Naive thymus-derived CD4-positive, alpha-beta T cell (primary cell): ENCODE measurements at regions of chr21 and their contacts with region 1.

Region 1: DNA sequence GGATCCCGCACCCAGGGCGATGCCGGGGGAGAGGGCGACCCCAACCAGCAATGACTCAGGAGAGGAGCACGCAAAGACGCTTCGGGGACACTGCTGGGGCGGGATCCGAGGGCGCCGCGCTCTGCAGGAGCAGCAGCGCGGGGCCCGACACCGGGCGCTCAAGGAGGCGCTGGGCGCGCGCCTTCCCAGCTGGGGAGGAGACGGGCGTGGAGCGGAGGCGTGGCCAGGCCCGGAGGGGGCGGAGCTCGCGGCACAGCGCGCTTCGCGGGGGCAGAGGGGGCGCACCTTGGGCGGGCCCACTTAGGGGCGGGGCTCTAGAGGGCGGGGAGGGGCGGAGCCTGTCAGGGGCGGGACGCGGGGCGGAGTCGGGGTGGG is 369 bp downstream of the SUMO3 start:
- DNase-seq: peak; percentile 87 to 98 (median 91)
- ATAC-seq: peak; percentile 96
- H3K4me3 ChIP-seq: peak overlapping the region; percentile 68
- H3K4me3 Mint-ChIP-seq: peak overlapping the region in 9 of 10 donors; percentile 27 to 83 (median 66)
- H3K27ac ChIP-seq: peak overlapping the region; percentile 96
- H3K27ac Mint-ChIP-seq: peak overlapping the region in 3 of 9 donors; percentile 21 to 42 (median 32)
- H3K4me1 ChIP-seq: no peaks in the 10 kb centered on the region
- H3K4me1 Mint-ChIP-seq: peaks cover 5 to 31% (median 10%) of the 10 kb centered on the region in 7 donors
- H3K27me3 ChIP-seq: no peaks in the 10 kb centered on the region
- H3K27me3 Mint-ChIP-seq: peaks cover 0 to 9% (median 0%) of the 10 kb centered on the region in 5 donors

Region 2: DNA sequence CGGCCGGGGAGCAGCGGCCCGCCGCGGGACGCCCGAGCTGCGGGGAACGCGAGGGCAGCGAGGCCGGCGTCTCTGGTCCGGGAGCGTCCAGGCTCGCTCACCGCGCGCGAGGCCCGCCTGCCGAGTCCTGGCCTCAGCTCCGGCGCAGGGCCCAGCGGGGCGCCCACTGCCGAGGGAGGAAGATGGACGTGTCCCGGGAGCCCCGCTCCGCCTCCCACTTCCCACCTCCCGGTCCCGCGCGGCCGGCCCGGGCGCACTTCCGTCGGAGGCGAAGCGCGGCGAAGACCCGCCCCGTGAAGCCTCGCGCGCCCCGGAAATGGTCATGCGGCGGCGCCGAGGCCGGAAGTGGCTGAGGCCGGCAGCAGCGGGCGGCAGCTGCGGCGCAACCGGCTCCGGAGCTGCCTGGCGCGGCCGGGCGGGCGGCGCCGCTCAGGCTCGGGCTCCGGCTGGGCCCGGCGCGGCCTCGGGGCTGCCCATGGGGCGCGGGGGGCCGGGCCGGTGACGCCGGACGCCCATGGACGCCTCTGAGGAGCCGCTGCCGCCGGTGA is 805.4 kb before region 1 on chr21 and contains the start of gene TRAPPC10:
- CTCF ChIA-PET with region 1: no interaction called
- POLR2A ChIA-PET with region 1: no interaction called
- intact Hi-C with region 1: loop called in 1 of 2 experiments (anchors 5 kb)
- DNase-seq: peak; percentile 60 to 91 (median 73)
- ATAC-seq: peak; percentile 78
- H3K4me3 ChIP-seq: peak within 1 kb of the TSS; percentile 63
- H3K4me3 Mint-ChIP-seq: peak within 1 kb of the TSS; percentile 87 to 97 (median 93)
- H3K27ac ChIP-seq: peak within 1 kb of the TSS; percentile 92
- H3K27ac Mint-ChIP-seq: peak within 1 kb of the TSS; percentile 92 to 96 (median 95)
- H3K4me1 ChIP-seq: peaks cover 24 to 34% of the 10 kb centered on the region in 2 donors
- H3K4me1 Mint-ChIP-seq: peaks cover 38 to 51% (median 50%) of the 10 kb centered on the region in 7 donors
- H3K27me3 ChIP-seq: no peaks in the 10 kb centered on the region
- H3K27me3 Mint-ChIP-seq: no peaks in the 10 kb centered on the region
- total RNA-seq, gene TRAPPC10: 80.6 to 119 (median 93.2) TPM

Region 3: GRCh38 chr21:44801468-44802395 is 15.8 kb before region 1 on chr21 and contains the start of gene UBE2G2:
- CTCF ChIA-PET with region 1: interaction called, 3 read pairs
- POLR2A ChIA-PET with region 1: interaction called, 7 read pairs
- intact Hi-C with region 1: loop called (anchors 1 kb)
- DNase-seq: peak; percentile 79 to 95 (median 88)
- ATAC-seq: peak; percentile 95
- H3K4me3 ChIP-seq: peak within 1 kb of the TSS; percentile 92
- H3K4me3 Mint-ChIP-seq: peak within 1 kb of the TSS; percentile 88 to 100 (median 96)
- H3K27ac ChIP-seq: peak within 1 kb of the TSS; percentile 85
- H3K27ac Mint-ChIP-seq: peak within 1 kb of the TSS; percentile 85 to 99 (median 94)
- H3K4me1 ChIP-seq: peaks cover 19 to 27% of the 10 kb centered on the region in 2 donors
- H3K4me1 Mint-ChIP-seq: peaks cover 24 to 53% (median 45%) of the 10 kb centered on the region in 7 donors
- H3K27me3 ChIP-seq: no peaks in the 10 kb centered on the region
- H3K27me3 Mint-ChIP-seq: no peaks in the 10 kb centered on the region
- total RNA-seq, gene UBE2G2: 108 to 150 (median 129) TPM

Region 4: DNA sequence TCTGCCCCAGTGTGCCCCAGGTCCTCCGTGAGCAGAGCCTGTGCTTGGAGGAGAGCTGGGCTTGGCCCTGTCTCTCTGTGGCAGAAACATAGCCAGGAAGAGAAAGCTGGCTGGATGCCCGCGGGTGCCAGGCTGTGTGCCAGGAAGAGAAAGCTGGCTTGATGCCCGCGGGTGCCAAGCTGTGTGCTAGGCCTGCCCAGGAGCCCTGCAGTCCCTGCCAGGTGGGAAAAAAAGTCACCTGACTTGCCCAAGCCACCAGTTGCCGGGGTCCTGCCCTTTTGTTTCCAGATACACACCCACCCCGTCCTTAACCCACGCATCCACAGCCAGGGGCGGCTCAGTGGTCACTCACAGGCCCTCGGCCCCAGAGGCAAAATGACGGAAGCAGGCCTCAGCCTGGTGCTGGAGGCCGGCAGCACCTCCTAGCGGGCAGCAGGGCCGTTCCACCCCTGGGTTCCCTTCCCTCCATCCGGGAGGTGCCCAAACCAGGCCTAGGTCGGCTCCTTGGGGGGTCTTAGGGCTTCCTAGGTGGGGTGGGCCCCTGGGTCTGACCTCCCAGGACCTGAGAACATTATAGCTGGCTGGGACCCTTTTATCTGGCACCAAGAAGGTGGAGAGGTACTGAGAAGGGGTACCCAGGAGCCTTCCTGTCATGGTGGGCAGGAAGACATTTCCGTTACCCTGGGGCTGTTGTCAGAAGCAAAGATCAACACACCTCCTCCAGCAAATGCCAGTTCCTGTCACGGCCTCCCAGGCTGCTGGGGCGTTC is 94.1 kb after region 1 on chr21:
- CTCF ChIA-PET with region 1: no interaction called
- POLR2A ChIA-PET with region 1: interaction called, 4 read pairs
- intact Hi-C with region 1: loop called in 1 of 2 experiments (anchors 5 kb)
- DNase-seq: peak; percentile 47 to 82 (median 78)
- ATAC-seq: peak; percentile 76
- H3K4me3 ChIP-seq: peak overlapping the region; percentile 49
- H3K4me3 Mint-ChIP-seq: peak overlapping the region; percentile 67 to 91 (median 82)
- H3K27ac ChIP-seq: peak overlapping the region; percentile 80
- H3K27ac Mint-ChIP-seq: peak overlapping the region; percentile 74 to 98 (median 93)
- H3K4me1 ChIP-seq: peaks cover 59 to 83% of the 10 kb centered on the region in 2 donors
- H3K4me1 Mint-ChIP-seq: peaks cover 53 to 86% (median 64%) of the 10 kb centered on the region in 7 donors
- H3K27me3 ChIP-seq: no peaks in the 10 kb centered on the region
- H3K27me3 Mint-ChIP-seq: no peaks in the 10 kb centered on the region

Region 5: GRCh38 chr21:44939532-44940115 is 122.1 kb after region 1 on chr21 and contains the start of gene SLX9:
- CTCF ChIA-PET with region 1: no interaction called
- POLR2A ChIA-PET with region 1: no interaction called
- intact Hi-C with region 1: loop called in 1 of 2 experiments (anchors 1 kb)
- DNase-seq: peak; percentile 70 to 88 (median 79)
- ATAC-seq: peak; percentile 94
- H3K4me3 ChIP-seq: peak within 1 kb of the TSS; percentile 83
- H3K4me3 Mint-ChIP-seq: peak within 1 kb of the TSS; percentile 87 to 95 (median 91)
- H3K27ac ChIP-seq: peak within 1 kb of the TSS; percentile 80
- H3K27ac Mint-ChIP-seq: peak within 1 kb of the TSS; percentile 82 to 96 (median 87)
- H3K4me1 ChIP-seq: peaks cover 22 to 34% of the 10 kb centered on the region in 2 donors
- H3K4me1 Mint-ChIP-seq: peaks cover 30 to 55% (median 45%) of the 10 kb centered on the region in 7 donors
- H3K27me3 ChIP-seq: no peaks in the 10 kb centered on the region
- H3K27me3 Mint-ChIP-seq: no peaks in the 10 kb centered on the region
- total RNA-seq, gene SLX9: 17.8 to 46.4 (median 20.6) TPM

Region 6: GRCh38 chr21:45074048-45074817 is 256.7 kb after region 1 on chr21 and contains the start of gene ADARB1:
- CTCF ChIA-PET with region 1: no interaction called
- POLR2A ChIA-PET with region 1: no interaction called
- intact Hi-C with region 1: loop called (anchors 5 kb)
- DNase-seq: peak; percentile 50 to 82 (median 69)
- ATAC-seq: peak; percentile 84
- H3K4me3 ChIP-seq: peak within 1 kb of the TSS; percentile 65
- H3K4me3 Mint-ChIP-seq: peak within 1 kb of the TSS; percentile 91 to 100 (median 96)
- H3K27ac ChIP-seq: peak within 1 kb of the TSS; percentile 87
- H3K27ac Mint-ChIP-seq: peak within 1 kb of the TSS; percentile 86 to 98 (median 94)
- H3K4me1 ChIP-seq: peaks cover 31 to 34% of the 10 kb centered on the region in 2 donors
- H3K4me1 Mint-ChIP-seq: peaks cover 31 to 45% (median 41%) of the 10 kb centered on the region in 7 donors
- H3K27me3 ChIP-seq: no peaks in the 10 kb centered on the region
- H3K27me3 Mint-ChIP-seq: no peaks in the 10 kb centered on the region
- total RNA-seq, gene ADARB1: 35.7 to 52.2 (median 38.9) TPM

Region 7: DNA sequence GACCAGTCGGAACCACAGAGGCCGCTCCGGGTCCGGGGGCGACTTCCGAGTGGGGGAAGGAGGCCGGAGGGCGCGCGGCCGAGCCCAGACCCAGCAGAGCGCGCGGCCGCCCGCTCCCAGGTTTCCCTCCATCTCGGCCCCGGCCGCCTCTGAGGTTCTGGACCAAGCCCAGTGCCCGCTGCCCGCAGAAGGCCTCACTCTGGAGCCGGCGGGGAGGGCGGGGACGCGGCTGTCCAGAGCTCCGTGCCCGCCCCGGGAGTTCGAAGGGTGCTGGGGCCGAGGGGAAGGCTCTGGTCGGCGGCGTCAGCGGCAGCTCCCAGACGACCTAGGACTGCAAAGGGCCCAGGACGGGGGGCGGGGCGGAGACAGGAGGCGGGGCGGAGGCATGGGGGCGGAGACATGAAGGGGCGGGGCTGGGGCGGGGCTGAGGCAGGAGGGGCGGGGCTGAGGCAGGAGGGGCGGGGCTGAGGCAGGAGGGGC is 772.8 kb after region 1 on chr21:
- CTCF ChIA-PET with region 1: no interaction called
- POLR2A ChIA-PET with region 1: no interaction called
- intact Hi-C with region 1: loop called in 1 of 2 experiments (anchors 2 kb)
- DNase-seq: peak in 3 of 9 donors; percentile 72 to 81 (median 78)
- ATAC-seq: peak; percentile 83
- H3K4me3 ChIP-seq: peak overlapping the region; percentile 42
- H3K4me3 Mint-ChIP-seq: peak overlapping the region in 8 of 10 donors; percentile 21 to 69 (median 48)
- H3K27ac ChIP-seq: peak overlapping the region; percentile 65
- H3K27ac Mint-ChIP-seq: peak overlapping the region in 1 of 9 donors; percentile 16
- H3K4me1 ChIP-seq: peaks cover 21 to 22% of the 10 kb centered on the region in 2 donors
- H3K4me1 Mint-ChIP-seq: peaks cover 0 to 22% (median 7%) of the 10 kb centered on the region in 7 donors
- H3K27me3 ChIP-seq: no peaks in the 10 kb centered on the region
- H3K27me3 Mint-ChIP-seq: peaks cover 0 to 17% (median 11%) of the 10 kb centered on the region in 5 donors